AG04449 (cell line): ENCODE measurements at regions of chr1 and their contacts with region 1.

Region 1: GRCh38 chr1:161153679-161154426 is at the start of gene UFC1:
- DNase-seq: no peak
- H3K4me3 ChIP-seq: peak within 1 kb of the TSS; percentile 94
- CTCF ChIP-seq: no peak

Region 2: DNA sequence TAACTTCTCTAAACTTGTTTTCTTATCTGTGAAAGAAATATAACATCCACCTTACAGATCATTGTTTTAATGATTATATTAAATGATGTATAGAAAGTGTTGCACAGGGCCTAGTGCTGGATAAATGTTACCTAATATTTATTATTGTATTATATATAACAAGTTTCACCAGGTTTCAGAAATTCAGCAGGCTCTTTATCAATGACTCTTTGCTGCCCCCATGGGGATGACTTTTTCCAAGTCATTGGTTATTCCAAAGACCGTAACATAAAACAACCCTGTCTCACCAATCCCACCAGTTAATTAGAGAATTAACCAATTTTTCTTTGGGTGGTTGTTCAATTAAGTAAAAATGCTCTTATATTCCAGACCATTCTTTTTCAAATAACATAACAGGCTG is 14.1 kb before region 1 on chr1:
- CTCF ChIA-PET with region 1: interaction called, 10 read pairs
- POLR2A ChIA-PET with region 1: interaction called, 3 read pairs
- DNase-seq: no peak
- H3K4me3 ChIP-seq: no peak overlapping the region
- CTCF ChIP-seq: peak; percentile 34

Region 3: GRCh38 chr1:161165742-161166668 is 12.2 kb after region 1 on chr1 and contains the start of gene PPOX:
- CTCF ChIA-PET with region 1: interaction called, 17 read pairs
- POLR2A ChIA-PET with region 1: interaction called, 8 read pairs
- DNase-seq: peak; percentile 91
- H3K4me3 ChIP-seq: peak within 1 kb of the TSS; percentile 93
- CTCF ChIP-seq: peak; percentile 52